ENCODE measurements at regions of chr2 and their contacts with region 1.

Region 1: GRCh38 chr2:112481050-112481527 is 867 bp upstream of the TTL start:
- DNase-seq: no peak
- H3K4me3 ChIP-seq: peak overlapping the region; percentile 83
- CTCF ChIP-seq: peak; percentile 92

Region 2: GRCh38 chr2:112259509-112260294 is 221.4 kb before region 1 on chr2:
- CTCF ChIA-PET with region 1: interaction called, 14 read pairs
- POLR2A ChIA-PET with region 1: no interaction called
- DNase-seq: no peak
- H3K4me3 ChIP-seq: no peak overlapping the region
- CTCF ChIP-seq: peak; percentile 93

Region 3: DNA sequence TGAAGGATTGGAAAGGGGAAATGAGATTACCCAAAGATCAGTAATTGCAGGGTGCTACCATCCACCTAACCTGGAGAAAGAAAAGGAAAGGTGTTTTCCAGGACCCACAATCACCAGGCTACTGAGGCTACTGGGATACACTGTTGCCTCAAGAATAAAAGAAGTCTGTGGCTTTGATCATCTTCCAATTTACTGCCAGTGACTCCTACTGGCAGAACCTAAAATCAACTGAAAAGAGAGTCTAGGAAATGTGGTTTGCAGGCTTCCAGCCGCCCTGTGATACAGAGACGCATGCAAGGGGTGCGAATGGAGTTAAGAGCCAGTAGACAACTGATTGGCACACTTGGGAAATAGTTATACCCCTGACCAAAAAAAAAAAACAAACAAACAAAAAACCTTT is 15.7 kb before region 1 on chr2:
- CTCF ChIA-PET with region 1: interaction called, 18 read pairs
- POLR2A ChIA-PET with region 1: no interaction called
- DNase-seq: no peak
- H3K4me3 ChIP-seq: no peak overlapping the region
- CTCF ChIP-seq: no peak

Region 4: GRCh38 chr2:112493858-112494648 is 13.0 kb after region 1 on chr2:
- CTCF ChIA-PET with region 1: interaction called, 23 read pairs
- POLR2A ChIA-PET with region 1: interaction called, 3 read pairs
- DNase-seq: no peak
- H3K4me3 ChIP-seq: no peak overlapping the region
- CTCF ChIP-seq: no peak

Region 5: GRCh38 chr2:112584134-112584890 is 103.2 kb after region 1 on chr2 and contains the start of gene CHCHD5:
- CTCF ChIA-PET with region 1: interaction called, 15 read pairs
- POLR2A ChIA-PET with region 1: no interaction called
- DNase-seq: no peak
- H3K4me3 ChIP-seq: peak within 1 kb of the TSS; percentile 89
- CTCF ChIP-seq: peak; percentile 13

Region 6: GRCh38 chr2:112714836-112715631 is 233.9 kb after region 1 on chr2:
- CTCF ChIA-PET with region 1: no interaction called
- POLR2A ChIA-PET with region 1: no interaction called
- DNase-seq: no peak
- H3K4me3 ChIP-seq: no peak overlapping the region
- CTCF ChIP-seq: no peak